ENCODE measurements at regions of chr6 and their contacts with region 1.

Region 1: GRCh38 chr6:15621203-15622044 is 41.4 kb downstream of the DTNBP1 start:
- DNase-seq: no peak
- H3K4me3 ChIP-seq: no peak overlapping the region
- H3K27me3 ChIP-seq: no peaks in the 10 kb centered on the region
- CTCF ChIP-seq: no peak

Region 2: DNA sequence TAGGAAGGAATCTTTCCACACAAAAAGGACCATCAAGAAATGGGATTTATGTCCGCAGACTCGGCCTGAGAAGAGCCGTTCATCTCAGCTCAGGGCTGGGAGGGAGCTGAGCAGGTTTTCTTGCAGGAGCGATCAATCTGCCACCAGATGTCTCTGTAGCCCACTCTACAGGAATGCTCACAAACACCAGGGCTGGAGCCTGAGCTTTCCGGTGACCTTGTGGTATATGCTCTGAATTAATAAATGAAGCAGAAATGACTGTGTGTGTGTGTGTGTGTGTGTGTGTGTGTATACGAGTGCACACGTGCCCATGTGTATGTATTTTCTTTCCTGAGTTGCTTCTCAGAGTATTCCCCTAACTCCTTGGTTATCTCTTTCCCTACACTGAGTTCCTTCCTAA is 1491.8 kb before region 1 on chr6:
- CTCF ChIA-PET with region 1: interaction called, 19 read pairs
- POLR2A ChIA-PET with region 1: no interaction called
- DNase-seq: no peak
- H3K4me3 ChIP-seq: no peak overlapping the region
- H3K27me3 ChIP-seq: no peaks in the 10 kb centered on the region
- CTCF ChIP-seq: peak; percentile 62

Region 3: DNA sequence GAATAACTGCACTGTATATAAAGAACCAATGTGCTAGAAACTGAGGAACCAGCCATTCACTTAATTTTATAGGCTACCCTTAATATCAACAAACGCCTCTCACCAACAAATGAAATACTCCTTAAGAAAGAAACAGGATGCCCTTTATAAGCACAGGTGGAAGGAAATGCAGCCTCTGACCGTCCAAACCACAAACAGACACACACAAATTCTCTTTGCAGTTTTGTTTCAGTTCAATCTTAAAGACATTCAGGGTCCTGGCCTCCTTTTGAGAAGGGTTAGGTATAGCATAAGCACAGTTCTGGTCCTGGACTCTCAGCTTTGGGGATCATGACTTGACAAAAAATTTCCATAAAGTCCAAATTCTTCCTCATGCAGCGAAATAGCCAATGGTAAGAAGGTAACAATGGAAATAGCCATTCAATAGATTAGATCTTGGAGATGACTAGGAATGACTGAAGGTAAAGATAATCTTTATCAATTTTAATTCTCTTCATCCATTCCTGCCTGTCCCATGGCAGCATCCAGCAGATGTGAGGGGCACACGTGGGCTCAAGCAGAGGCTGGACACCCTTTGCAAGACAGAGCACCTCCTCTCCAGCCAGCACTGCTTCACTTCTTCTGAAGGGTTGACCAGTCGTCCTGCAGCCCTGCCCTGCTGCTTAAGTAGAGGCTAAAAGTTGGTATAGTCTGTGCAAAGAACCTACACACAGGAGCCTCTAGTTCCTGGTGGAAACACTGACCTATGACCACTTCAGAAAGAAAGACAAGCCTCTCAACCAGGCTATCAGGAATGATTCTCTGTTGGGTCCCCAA is 1380.0 kb before region 1 on chr6:
- CTCF ChIA-PET with region 1: no interaction called
- POLR2A ChIA-PET with region 1: interaction called, 18 read pairs
- DNase-seq: no peak
- H3K4me3 ChIP-seq: no peak overlapping the region
- H3K27me3 ChIP-seq: no peaks in the 10 kb centered on the region
- CTCF ChIP-seq: no peak

Region 4: DNA sequence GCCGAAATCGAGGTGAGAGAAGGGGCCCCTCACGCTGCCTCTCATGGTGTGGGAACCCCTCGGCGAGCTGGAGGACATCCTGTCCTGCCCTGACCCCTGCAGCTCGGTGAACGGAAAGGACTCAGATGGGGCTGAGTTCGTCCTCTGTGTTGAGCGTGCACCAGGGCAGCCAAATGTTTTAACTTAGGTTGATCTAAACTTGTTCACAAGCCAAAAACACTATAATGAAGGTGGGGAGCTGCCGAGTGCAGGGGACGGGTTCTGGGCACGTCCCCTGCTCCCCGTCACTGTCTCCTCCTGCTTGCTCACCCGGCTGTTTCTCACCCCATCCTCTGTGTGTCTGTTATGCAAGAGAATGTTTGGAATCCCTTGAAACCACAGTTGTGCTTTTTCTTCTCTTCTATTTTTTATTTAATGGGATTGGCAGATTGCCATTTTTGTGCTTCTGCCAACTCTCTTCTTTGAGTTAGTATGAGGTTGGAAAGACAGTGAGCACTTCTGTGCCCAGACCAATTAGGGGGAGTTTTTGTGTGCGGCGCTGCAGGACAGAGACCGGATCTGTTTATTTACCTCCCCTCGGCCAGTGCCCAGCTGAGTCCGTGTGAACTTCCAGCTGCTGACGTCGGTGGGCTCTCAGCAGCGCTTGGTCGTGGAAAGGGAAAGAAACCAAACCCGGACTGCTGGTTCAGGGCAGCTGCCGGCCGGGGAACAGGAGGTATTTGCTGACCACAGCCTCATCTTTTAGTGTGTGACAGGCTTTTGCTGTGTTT is 116.7 kb before region 1 on chr6:
- CTCF ChIA-PET with region 1: interaction called, 13 read pairs
- POLR2A ChIA-PET with region 1: no interaction called
- DNase-seq: peak; percentile 97
- H3K4me3 ChIP-seq: peak overlapping the region; percentile 16
- H3K27me3 ChIP-seq: no peaks in the 10 kb centered on the region
- CTCF ChIP-seq: peak; percentile 24

Region 5: GRCh38 chr6:15577550-15578171 is 43.8 kb before region 1 on chr6:
- CTCF ChIA-PET with region 1: no interaction called
- POLR2A ChIA-PET with region 1: no interaction called
- DNase-seq: no peak
- H3K4me3 ChIP-seq: no peak overlapping the region
- H3K27me3 ChIP-seq: no peaks in the 10 kb centered on the region
- CTCF ChIP-seq: no peak

Region 6: DNA sequence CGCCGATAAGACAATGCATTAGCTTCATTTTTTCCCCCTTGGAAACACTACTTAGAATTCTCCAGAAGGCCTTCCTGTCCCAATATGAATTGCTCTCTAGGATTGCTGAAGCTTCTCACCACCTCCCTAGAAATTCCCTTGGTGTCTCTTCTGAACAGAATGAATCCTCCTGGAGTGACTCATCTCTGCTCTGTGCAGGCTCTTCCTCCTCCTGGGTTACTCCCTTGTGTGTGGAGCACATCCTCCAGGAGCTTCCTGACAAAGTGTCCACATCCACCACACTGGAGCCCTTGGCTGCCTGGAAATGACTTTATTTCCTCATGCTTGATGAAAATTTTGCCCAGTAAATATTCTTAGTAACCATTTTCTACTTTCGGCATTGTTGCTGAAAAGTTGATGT is 13.0 kb before region 1 on chr6:
- CTCF ChIA-PET with region 1: interaction called, 13 read pairs
- POLR2A ChIA-PET with region 1: no interaction called
- DNase-seq: peak; percentile 56
- H3K4me3 ChIP-seq: no peak overlapping the region
- H3K27me3 ChIP-seq: no peaks in the 10 kb centered on the region
- CTCF ChIP-seq: no peak

Region 7: DNA sequence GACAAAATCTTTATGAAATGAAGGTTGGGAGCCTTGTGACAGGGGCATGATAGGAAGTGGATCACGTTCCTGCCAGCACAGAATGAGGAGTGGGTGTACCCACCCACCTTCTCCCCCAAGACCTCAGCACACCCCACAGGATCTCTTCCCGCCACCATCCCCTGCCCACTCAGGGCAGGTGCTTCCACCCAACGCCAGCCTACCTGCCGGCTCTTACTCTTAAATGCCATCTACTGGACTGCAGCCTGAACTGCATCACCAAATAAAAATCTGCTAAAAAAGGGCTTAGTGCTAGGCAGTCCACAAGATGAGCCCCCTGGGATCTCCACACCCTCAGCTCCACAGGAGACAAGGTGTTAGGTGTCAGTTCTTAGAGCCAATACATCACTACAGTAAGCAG is 20.9 kb after region 1 on chr6:
- CTCF ChIA-PET with region 1: interaction called, 12 read pairs
- POLR2A ChIA-PET with region 1: no interaction called
- DNase-seq: no peak
- H3K4me3 ChIP-seq: no peak overlapping the region
- H3K27me3 ChIP-seq: no peaks in the 10 kb centered on the region
- CTCF ChIP-seq: no peak

Region 8: DNA sequence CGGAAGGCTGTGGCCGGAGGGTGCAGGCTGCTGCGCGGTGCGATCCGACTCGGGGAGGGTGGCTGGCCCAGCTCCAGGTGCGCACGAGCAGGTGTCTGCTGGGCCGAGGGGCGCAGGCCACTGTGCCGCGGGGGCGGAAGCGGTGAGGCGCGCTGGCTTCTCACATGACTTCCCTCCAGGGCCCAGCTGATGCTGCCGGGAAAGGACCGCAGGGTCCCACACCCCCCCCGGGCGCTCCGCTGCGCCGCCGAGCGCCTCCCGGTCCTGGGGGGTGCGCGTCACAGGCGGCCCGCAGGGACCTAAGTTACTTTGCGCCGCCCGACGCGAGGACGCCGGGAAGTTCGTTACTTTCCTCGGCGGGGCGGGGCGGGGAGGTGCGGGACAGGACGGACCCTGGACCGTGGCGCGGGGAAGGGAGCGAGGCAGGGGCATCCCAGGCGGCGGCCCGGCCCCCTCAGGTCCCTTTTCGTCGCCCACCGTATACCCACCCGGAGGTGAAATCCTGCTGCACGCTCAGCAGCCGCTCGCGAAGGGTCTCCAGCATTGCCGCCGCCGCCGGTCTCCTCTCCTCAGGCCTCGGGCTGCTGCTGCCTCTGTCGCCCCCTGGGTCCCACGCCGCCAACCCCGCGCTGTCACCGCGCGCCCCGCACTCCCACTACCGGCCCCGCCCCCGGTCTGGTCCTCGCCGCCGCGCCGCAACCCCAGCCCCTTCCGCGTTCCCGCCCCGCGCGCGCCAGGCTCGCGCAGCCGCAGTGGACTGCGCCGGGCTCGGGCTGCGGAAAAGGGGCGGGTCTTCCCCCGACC is 41.1 kb after region 1 on chr6 and contains the start of gene DTNBP1:
- CTCF ChIA-PET with region 1: no interaction called
- POLR2A ChIA-PET with region 1: no interaction called
- DNase-seq: peak; percentile 9
- H3K4me3 ChIP-seq: peak within 1 kb of the TSS; percentile 93
- H3K27me3 ChIP-seq: peaks cover 2% of the 10 kb centered on the region
- CTCF ChIP-seq: no peak
- polyA plus RNA-seq, gene DTNBP1: 15.8 and 19.1 TPM in 2 replicates

Region 9: GRCh38 chr6:15763837-15764236 is 142.4 kb after region 1 on chr6:
- CTCF ChIA-PET with region 1: no interaction called
- POLR2A ChIA-PET with region 1: no interaction called
- DNase-seq: no peak
- H3K4me3 ChIP-seq: no peak overlapping the region
- H3K27me3 ChIP-seq: no peaks in the 10 kb centered on the region
- CTCF ChIP-seq: no peak

Region 10: GRCh38 chr6:15922510-15923250 is 301.3 kb after region 1 on chr6:
- CTCF ChIA-PET with region 1: no interaction called
- POLR2A ChIA-PET with region 1: no interaction called
- DNase-seq: peak; percentile 76
- H3K4me3 ChIP-seq: no peak overlapping the region
- H3K27me3 ChIP-seq: no peaks in the 10 kb centered on the region
- CTCF ChIP-seq: no peak

Measured in BJ (cell line).